ENCODE measurements at regions of chr7 and their contacts with region 1.

Region 1: DNA sequence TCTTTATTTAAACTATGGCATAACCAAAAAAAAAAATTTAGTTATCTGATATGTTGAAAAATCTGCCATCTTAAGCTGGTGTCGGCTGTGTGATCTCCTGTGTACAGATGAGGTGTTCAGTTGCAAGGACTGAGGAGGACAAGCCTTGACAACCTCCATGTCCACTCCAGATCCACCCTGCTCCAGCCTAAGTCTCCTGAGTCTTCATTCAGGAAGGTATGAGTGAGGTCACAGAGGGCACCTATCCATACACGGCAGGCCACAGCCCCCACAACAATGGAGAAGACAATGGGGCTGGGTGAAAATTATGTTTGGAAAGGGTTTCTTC is 16.1 kb downstream of the TARP start:
- DNase-seq: no peak
- H3K4me3 ChIP-seq: no peak overlapping the region
- H3K27ac ChIP-seq: no peak overlapping the region
- H3K4me1 ChIP-seq: no peaks in the 10 kb centered on the region
- H3K27me3 ChIP-seq: no peaks in the 10 kb centered on the region
- CTCF ChIP-seq: no peak
- EP300 ChIP-seq: no peak
- POLR2A ChIP-seq: no peak

Region 2: DNA sequence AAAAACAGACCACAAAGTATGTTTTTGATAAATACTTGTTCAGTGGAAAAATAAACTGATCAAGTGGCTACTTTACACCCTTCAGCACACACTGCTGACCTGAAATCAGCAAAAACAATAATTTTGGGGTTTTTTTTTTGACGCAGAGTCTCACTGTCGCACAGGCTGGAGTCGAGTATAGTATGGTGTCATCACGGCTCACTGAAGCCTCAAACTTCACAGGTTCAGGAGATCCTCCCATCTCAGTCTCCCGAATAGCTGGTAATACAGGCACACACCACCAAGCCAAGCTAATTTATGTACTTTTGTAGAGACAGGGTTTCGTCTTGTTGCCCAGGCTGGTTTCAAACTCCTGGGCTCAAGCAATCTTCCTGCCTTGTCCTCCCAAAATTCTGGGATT is 14.5 kb before region 1 on chr7:
- intact Hi-C with region 1: no loop called
- DNase-seq: no peak
- H3K4me3 ChIP-seq: no peak overlapping the region
- H3K27ac ChIP-seq: no peak overlapping the region
- H3K4me1 ChIP-seq: no peaks in the 10 kb centered on the region
- H3K27me3 ChIP-seq: no peaks in the 10 kb centered on the region
- CTCF ChIP-seq: no peak
- EP300 ChIP-seq: no peak
- POLR2A ChIP-seq: no peak

Region 3: DNA sequence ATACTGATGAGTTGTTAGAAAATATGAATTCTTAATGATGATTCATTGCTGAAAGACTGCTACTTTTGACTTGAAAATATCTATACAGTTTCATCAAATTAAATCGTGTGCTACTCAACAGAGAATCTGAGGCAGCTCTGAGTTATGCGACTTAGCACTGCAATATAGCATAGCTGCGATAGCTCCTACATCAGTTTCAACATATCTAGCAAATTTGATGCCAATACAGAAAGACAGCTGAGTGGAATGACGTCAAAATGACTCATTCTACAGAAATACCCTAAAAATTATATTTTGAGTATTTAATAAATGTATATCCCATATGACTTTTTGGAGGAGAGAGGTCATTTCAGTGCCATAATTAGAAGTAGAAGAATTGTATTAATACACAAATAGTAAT is 17.2 kb after region 1 on chr7:
- intact Hi-C with region 1: loop called (anchors 2 kb)
- DNase-seq: no peak
- H3K4me3 ChIP-seq: no peak overlapping the region
- H3K27ac ChIP-seq: no peak overlapping the region
- H3K4me1 ChIP-seq: no peaks in the 10 kb centered on the region
- H3K27me3 ChIP-seq: no peaks in the 10 kb centered on the region
- CTCF ChIP-seq: no peak
- EP300 ChIP-seq: no peak
- POLR2A ChIP-seq: no peak

Measured in esophagus muscularis mucosa (tissue), 4 donors.